T-cell (primary cell): ENCODE measurements at regions of chr2 and their contacts with region 1.

Region 1: GRCh38 chr2:208265801-208266552 is at the start of gene PIKFYVE:
- DNase-seq: peak; percentile 71 to 92 (median 82)
- ATAC-seq: peak; percentile 87 to 88 (median 88)
- H3K4me3 ChIP-seq: peak within 1 kb of the TSS; percentile 72 to 75
- H3K4me3 Mint-ChIP-seq: peak within 1 kb of the TSS; percentile 92 to 95 (median 94)
- H3K27ac ChIP-seq: peak within 1 kb of the TSS; percentile 74
- H3K27ac Mint-ChIP-seq: peak within 1 kb of the TSS; percentile 93 to 97
- H3K4me1 ChIP-seq: peaks cover 13 to 30% of the 10 kb centered on the region in 2 experiments
- H3K4me1 Mint-ChIP-seq: peaks cover 46 to 57% (median 56%) of the 10 kb centered on the region in 3 donors
- H3K27me3 ChIP-seq: no peaks in the 10 kb centered on the region
- H3K27me3 Mint-ChIP-seq: no peaks in the 10 kb centered on the region
- total RNA-seq, gene PIKFYVE: 35.3 to 42.6 (median 38.6) TPM

Region 2: GRCh38 chr2:208254871-208255556 is 11.0 kb before region 1 on chr2 and contains the start of gene IDH1:
- CTCF ChIA-PET with region 1: interaction called, 11 to 53 read pairs
- POLR2A ChIA-PET with region 1: interaction called, 3 to 6 read pairs
- DNase-seq: peak; percentile 65 to 97 (median 87)
- ATAC-seq: peak; percentile 80 to 88 (median 84)
- H3K4me3 ChIP-seq: peak within 1 kb of the TSS; percentile 87 to 91
- H3K4me3 Mint-ChIP-seq: peak within 1 kb of the TSS; percentile 97 to 98 (median 97)
- H3K27ac ChIP-seq: peak within 1 kb of the TSS; percentile 30
- H3K27ac Mint-ChIP-seq: peak within 1 kb of the TSS; percentile 76 to 81
- H3K4me1 ChIP-seq: peaks cover 0 to 20% of the 10 kb centered on the region in 2 experiments
- H3K4me1 Mint-ChIP-seq: peaks cover 27 to 31% (median 31%) of the 10 kb centered on the region in 3 donors
- H3K27me3 ChIP-seq: no peaks in the 10 kb centered on the region
- H3K27me3 Mint-ChIP-seq: no peaks in the 10 kb centered on the region
- total RNA-seq, gene IDH1: 5.1 to 22.9 (median 22.2) TPM